Endothelial cell of umbilical vein (primary cell): ENCODE measurements at regions of chr2 and their contacts with region 1.

Region 1: GRCh38 chr2:65366595-65367125 is 65.7 kb downstream of the SPRED2 start:
- DNase-seq: peak; percentile 97
- H3K4me3 ChIP-seq: no peak overlapping the region
- H3K27ac ChIP-seq: peak overlapping the region; percentile 27
- H3K4me1 ChIP-seq: peaks cover 20% of the 10 kb centered on the region
- H3K27me3 ChIP-seq: no peaks in the 10 kb centered on the region
- CTCF ChIP-seq: no peak
- POLR2A ChIP-seq: no peak

Region 2: DNA sequence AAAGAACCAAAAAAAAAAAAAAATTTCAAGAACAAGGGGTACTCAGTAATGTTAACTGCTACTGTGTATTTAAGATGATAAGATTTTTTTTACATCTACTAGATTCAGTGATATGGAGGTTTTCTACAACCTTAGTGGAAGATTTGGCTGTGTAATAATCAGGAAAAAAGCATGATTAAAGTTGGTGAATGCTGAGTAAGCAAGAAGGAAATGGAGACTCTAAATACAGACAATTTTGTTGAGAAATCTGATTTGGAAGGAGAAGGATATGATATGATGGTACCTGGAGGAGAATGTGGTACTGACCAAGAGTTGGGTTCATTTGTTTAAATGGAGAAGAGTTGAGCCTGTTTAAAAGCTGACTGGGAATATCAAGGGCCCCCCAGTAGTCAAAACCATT is 1903.5 kb before region 1 on chr2:
- CTCF ChIA-PET with region 1: no interaction called
- POLR2A ChIA-PET with region 1: no interaction called
- dilution Hi-C with region 1: no loop called
- intact Hi-C with region 1: no loop called
- DNase-seq: no peak
- H3K4me3 ChIP-seq: no peak overlapping the region
- H3K27ac ChIP-seq: no peak overlapping the region
- H3K4me1 ChIP-seq: peaks cover 3% of the 10 kb centered on the region
- H3K27me3 ChIP-seq: no peaks in the 10 kb centered on the region
- CTCF ChIP-seq: no peak
- POLR2A ChIP-seq: no peak

Region 3: GRCh38 chr2:65278531-65278981 is 88.1 kb before region 1 on chr2:
- CTCF ChIA-PET with region 1: interaction called, 4 read pairs
- POLR2A ChIA-PET with region 1: no interaction called
- dilution Hi-C with region 1: no loop called
- intact Hi-C with region 1: loop called (anchors 5 kb)
- DNase-seq: no peak
- H3K4me3 ChIP-seq: no peak overlapping the region
- H3K27ac ChIP-seq: no peak overlapping the region
- H3K4me1 ChIP-seq: peaks cover 16% of the 10 kb centered on the region
- H3K27me3 ChIP-seq: peaks cover 4 to 11% of the 10 kb centered on the region in 2 experiments
- CTCF ChIP-seq: no peak
- POLR2A ChIP-seq: no peak

Region 4: GRCh38 chr2:65377556-65378192 is 11.0 kb after region 1 on chr2:
- CTCF ChIA-PET with region 1: interaction called, 9 read pairs
- POLR2A ChIA-PET with region 1: no interaction called
- dilution Hi-C with region 1: no loop called
- intact Hi-C with region 1: loop called (anchors 1 kb)
- DNase-seq: peak; percentile 60
- H3K4me3 ChIP-seq: no peak overlapping the region
- H3K27ac ChIP-seq: no peak overlapping the region
- H3K4me1 ChIP-seq: peaks cover 12% of the 10 kb centered on the region
- H3K27me3 ChIP-seq: peaks cover 53% of the 10 kb centered on the region in 2 experiments
- CTCF ChIP-seq: no peak
- POLR2A ChIP-seq: no peak

Region 5: GRCh38 chr2:65420712-65421431 is 54.2 kb after region 1 on chr2:
- CTCF ChIA-PET with region 1: no interaction called
- POLR2A ChIA-PET with region 1: no interaction called
- dilution Hi-C with region 1: no loop called
- intact Hi-C with region 1: loop called (anchors 1 kb)
- DNase-seq: peak; percentile 82
- H3K4me3 ChIP-seq: no peak overlapping the region
- H3K27ac ChIP-seq: no peak overlapping the region
- H3K4me1 ChIP-seq: peaks cover 14% of the 10 kb centered on the region
- H3K27me3 ChIP-seq: peaks cover 54 to 63% of the 10 kb centered on the region in 2 experiments
- CTCF ChIP-seq: no peak
- POLR2A ChIP-seq: no peak

Region 6: DNA sequence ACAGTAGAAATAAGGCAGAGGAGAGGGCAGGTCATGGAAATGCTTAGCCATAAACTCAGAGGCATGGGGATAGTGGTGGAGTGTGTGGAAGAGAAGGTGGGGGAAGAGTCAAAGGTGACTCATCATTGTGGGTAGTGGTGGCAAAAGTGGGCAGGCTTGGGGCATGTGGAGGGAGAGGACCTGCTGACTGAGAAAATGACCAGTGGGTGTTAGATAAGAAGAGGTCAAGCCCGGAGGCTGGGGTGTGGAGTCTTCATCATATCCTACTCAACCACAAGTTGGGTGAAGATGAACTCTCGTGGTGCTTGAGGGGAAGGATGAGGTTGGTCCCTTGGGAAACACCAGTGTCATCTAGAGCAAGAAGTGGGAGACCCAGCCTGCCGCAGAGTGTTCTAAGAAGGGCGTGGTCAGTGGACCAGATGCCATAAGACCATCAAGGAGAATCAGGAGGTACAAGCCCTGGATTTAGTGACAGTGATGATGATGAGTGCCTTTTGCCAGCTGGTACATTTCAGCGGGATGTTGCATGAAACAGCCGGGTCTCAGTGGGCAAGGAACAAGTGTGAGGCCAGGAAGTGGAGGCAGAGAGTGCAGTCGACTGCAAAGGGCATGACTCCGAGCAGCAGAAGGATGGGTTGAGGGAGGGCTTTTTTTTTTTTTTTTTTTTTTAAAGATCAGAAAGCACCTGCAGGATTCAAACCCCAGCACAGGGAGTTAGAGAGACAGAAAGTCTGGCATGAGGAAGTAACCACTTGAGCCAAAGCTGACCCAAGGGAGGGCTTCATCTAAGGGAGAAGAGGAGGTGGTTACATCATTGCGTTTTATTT is 188.3 kb after region 1 on chr2:
- CTCF ChIA-PET with region 1: no interaction called
- POLR2A ChIA-PET with region 1: no interaction called
- dilution Hi-C with region 1: no loop called
- intact Hi-C with region 1: loop called (anchors 5 kb)
- DNase-seq: no peak
- H3K4me3 ChIP-seq: no peak overlapping the region
- H3K27ac ChIP-seq: no peak overlapping the region
- H3K4me1 ChIP-seq: no peaks in the 10 kb centered on the region
- H3K27me3 ChIP-seq: peaks cover 16 to 19% of the 10 kb centered on the region in 2 experiments
- CTCF ChIP-seq: no peak
- POLR2A ChIP-seq: no peak